ENCODE measurements at regions of chr16 and their contacts with region 1.

Region 1: GRCh38 chr16:10181196-10182162 is 749 bp downstream of the GRIN2A start:
- DNase-seq: peak; percentile 45 to 70
- ATAC-seq: peak; percentile 88 to 95 (median 90)
- H3K4me3 ChIP-seq: peak overlapping the region in 8 of 10 donors; percentile 15 to 49 (median 41)
- H3K27ac ChIP-seq: no peak overlapping the region
- H3K4me1 ChIP-seq: peaks cover 3 to 30% (median 22%) of the 10 kb centered on the region in 9 donors
- H3K27me3 ChIP-seq: peaks cover 11 to 91% (median 78%) of the 10 kb centered on the region in 7 donors
- CTCF ChIP-seq: peak; percentile 89 to 98 (median 92)

Region 2: DNA sequence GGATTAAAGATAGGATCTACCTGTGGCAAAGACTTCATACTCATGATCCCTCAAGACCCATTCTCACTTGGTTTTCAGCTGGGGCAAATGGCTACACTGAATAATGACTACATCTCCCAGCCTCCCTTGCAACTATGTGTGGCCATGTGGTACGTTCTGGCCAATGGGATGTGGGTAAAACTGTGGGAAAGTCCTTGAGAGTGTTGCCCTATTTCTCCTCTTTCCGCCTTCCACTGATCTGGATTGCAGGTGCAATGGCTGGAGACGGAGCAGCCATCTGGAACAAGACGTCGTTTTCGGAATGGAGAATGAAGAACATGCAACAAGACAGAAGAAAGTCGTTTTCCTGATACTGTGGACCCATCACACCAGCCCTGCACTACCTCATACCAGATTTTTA is 1041.5 kb before region 1 on chr16:
- intact Hi-C with region 1: loop called in 2 of 10 experiments (anchors 5 kb)
- DNase-seq: no peak
- ATAC-seq: peak in 6 of 8 donors; percentile 24 to 58 (median 48)
- H3K4me3 ChIP-seq: no peak overlapping the region
- H3K27ac ChIP-seq: no peak overlapping the region
- H3K4me1 ChIP-seq: peaks cover 0 to 17% (median 6%) of the 10 kb centered on the region in 9 donors
- H3K27me3 ChIP-seq: no peaks in the 10 kb centered on the region
- CTCF ChIP-seq: no peak

Region 3: GRCh38 chr16:9258423-9259051 is 922.9 kb before region 1 on chr16:
- intact Hi-C with region 1: loop called in 7 of 10 experiments (anchors 5 to 10 kb)
- DNase-seq: peak; percentile 13 to 17
- ATAC-seq: peak in 3 of 8 donors; percentile 49 to 66 (median 65)
- H3K4me3 ChIP-seq: no peak overlapping the region
- H3K27ac ChIP-seq: no peak overlapping the region
- H3K4me1 ChIP-seq: peaks cover 0 to 7% (median 0%) of the 10 kb centered on the region in 9 donors
- H3K27me3 ChIP-seq: peaks cover 0 to 21% (median 0%) of the 10 kb centered on the region in 7 donors
- CTCF ChIP-seq: peak; percentile 57 to 78 (median 70)

Region 4: DNA sequence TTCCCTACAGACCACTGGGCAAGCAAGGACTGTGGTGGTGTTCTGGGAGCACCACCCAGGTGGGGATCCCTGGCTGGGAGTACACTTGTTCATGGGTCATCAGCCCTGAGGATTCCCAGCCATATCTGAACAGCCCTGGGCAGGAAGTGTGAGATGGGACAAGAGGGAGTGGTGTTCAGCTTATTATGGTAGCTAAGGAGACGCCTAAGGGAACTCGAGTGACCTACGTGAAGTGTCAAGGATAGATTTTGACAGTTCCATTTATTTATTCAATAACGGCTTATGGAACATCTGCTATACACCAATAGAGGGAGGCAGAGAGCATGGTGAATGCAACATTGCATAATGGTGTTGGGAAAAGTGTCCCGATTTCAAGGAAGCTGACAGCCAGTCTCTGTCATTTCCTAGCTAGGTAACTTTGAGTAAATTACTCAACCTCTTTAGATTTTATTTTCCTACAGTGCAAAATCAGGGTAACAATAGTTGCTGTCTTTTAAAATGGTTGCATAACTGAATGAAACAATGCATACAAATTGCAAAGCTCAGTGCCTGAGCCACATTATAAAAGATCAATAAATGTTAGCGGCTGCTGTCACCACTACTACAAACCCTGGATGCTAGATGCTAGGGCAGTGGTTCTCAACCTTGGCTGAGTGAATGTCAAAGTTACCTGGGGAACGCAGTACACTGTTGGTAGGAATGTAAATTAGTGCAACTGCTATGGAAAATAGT is 533.3 kb before region 1 on chr16:
- intact Hi-C with region 1: loop called (anchors 2 to 10 kb)
- DNase-seq: peak in 1 of 2 donors; percentile 13
- ATAC-seq: peak in 5 of 8 donors; percentile 35 to 94 (median 48)
- H3K4me3 ChIP-seq: no peak overlapping the region
- H3K27ac ChIP-seq: no peak overlapping the region
- H3K4me1 ChIP-seq: no peaks in the 10 kb centered on the region
- H3K27me3 ChIP-seq: peaks cover 0 to 9% (median 0%) of the 10 kb centered on the region in 7 donors
- CTCF ChIP-seq: peak; percentile 60 to 80 (median 68)

Region 5: DNA sequence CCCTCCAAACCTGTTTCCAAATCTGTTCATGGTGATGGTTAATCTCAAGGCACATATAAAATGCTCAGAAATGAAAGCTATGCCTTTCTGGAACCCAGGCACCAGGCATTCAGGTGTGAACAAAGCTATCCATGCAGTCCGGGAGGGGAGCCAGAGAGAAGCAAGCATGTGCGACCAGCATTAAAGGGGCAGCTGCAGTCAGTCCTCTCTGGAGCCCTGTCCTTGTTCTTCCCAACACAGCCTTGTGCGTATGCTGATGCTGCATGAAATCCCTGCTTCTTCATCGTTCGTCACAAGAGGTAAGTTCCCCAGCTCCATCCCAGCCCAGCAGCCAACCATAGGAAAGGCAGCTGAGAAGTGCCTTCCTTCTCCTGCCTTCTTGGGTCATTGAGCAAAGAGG is 147.9 kb before region 1 on chr16:
- intact Hi-C with region 1: loop called in 2 of 10 experiments (anchors 2 to 5 kb)
- DNase-seq: no peak
- ATAC-seq: no peak
- H3K4me3 ChIP-seq: no peak overlapping the region
- H3K27ac ChIP-seq: no peak overlapping the region
- H3K4me1 ChIP-seq: no peaks in the 10 kb centered on the region
- H3K27me3 ChIP-seq: peaks cover 0 to 22% (median 7%) of the 10 kb centered on the region in 7 donors
- CTCF ChIP-seq: no peak

Measured in heart right ventricle (tissue), 16 donors.